Transverse colon (tissue), 4 donors: ENCODE measurements at regions of chr3 and their contacts with region 1.

Region 1: DNA sequence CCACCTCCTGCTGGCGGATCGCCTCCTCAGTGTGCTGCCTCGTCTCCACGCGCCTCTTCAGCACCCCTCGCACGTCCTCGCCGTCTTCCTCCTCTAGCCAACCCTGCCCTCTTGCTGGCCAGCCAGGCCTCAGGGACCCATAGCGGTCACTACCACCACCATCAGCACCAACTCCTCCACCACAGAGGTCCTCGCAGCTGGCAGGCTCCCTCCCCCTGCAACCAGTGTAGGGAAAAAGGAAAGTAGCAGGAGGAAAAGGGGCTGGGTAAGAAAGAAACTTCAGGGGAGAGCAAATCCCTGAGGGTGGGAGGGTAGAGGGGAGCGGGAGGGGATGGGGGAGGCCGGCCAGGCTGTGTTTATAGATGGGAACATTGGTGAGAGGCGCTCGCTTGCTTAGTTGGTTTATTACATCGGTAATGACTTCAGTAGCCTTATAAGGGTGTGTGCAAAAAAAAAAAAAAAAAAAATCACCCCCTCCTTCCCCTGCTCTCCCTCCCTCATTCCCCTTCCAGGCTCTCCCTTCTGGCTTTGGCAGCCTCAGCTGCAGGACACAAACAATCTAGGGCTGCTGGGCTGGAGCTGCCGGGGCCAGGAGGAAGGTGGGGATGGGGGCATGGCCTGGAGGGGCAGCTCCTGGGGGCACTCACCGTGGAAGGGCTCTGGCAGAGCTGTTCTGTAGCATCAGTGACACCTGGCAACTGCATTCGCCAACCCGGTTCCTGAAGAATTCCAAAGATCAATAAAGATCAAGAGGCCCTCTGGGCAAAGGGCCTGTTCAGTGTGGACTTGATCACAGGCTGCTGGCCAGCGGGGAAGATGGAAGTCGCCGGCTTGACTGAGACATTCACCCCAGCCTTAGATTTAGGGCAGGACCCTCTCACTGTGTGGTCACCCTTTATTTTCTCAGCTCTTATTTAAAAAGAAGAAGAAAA is 116.2 kb upstream of the HACD2 start:
- DNase-seq: peak; percentile 57
- H3K4me3 ChIP-seq: peak overlapping the region; percentile 39 to 57 (median 46)
- H3K27ac ChIP-seq: peak overlapping the region; percentile 81 to 89 (median 86)
- H3K4me1 ChIP-seq: peaks cover 0 to 26% (median 3%) of the 10 kb centered on the region in 4 donors
- H3K27me3 ChIP-seq: no peaks in the 10 kb centered on the region
- CTCF ChIP-seq: no peak
- EP300 ChIP-seq: no peak
- POLR2A ChIP-seq: peak; percentile 57

Region 2: GRCh38 chr3:123344175-123344906 is 356.7 kb before region 1 on chr3:
- in situ Hi-C with region 1: no loop called
- intact Hi-C with region 1: no loop called
- DNase-seq: no peak
- H3K4me3 ChIP-seq: no peak overlapping the region
- H3K27ac ChIP-seq: peak overlapping the region; percentile 14 to 55 (median 40)
- H3K4me1 ChIP-seq: peaks cover 0 to 9% (median 4%) of the 10 kb centered on the region in 4 donors
- H3K27me3 ChIP-seq: no peaks in the 10 kb centered on the region
- CTCF ChIP-seq: no peak
- EP300 ChIP-seq: no peak
- POLR2A ChIP-seq: no peak

Region 3: DNA sequence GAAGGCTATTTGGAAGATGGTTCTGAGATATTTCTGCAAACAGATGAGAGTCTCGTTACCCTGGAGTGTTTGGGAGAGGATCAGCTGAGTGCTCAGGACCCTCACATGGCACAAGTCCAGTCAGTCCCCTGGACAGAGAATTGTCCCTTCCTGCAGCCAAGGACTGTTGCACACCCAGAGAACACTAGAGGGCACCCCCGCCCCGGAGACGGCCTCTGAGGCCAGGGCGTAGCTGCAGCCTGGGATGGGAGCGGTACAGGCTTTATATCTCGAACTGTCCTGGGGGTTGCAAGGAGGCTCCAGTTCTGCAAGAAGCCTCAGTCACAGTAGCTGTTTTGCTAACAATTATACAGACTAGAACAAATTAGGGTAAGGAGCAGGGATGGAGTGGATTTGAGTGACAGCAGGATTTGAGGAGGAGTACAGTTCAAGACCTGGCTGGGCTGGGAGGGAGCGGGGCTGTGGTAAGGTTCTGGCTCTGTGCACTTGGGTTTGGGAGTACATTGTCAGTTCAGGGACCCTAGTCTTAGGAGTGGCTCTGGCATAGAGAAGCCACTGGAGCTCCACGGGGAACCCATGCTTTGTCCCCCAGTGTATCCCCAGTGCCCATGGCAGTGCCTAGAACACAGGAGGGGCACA is 48.6 kb before region 1 on chr3:
- in situ Hi-C with region 1: no loop called
- intact Hi-C with region 1: loop called (anchors 5 kb)
- DNase-seq: peak; percentile 84
- H3K4me3 ChIP-seq: no peak overlapping the region
- H3K27ac ChIP-seq: peak overlapping the region; percentile 71 to 90 (median 80)
- H3K4me1 ChIP-seq: peaks cover 23 to 53% (median 27%) of the 10 kb centered on the region in 4 donors
- H3K27me3 ChIP-seq: no peaks in the 10 kb centered on the region
- CTCF ChIP-seq: peak; percentile 83 to 88 (median 84)
- EP300 ChIP-seq: no peak
- POLR2A ChIP-seq: no peak

Region 4: GRCh38 chr3:123667784-123668183 is 33.3 kb before region 1 on chr3:
- in situ Hi-C with region 1: no loop called
- intact Hi-C with region 1: no loop called
- DNase-seq: no peak
- H3K4me3 ChIP-seq: no peak overlapping the region
- H3K27ac ChIP-seq: peak overlapping the region; percentile 20 to 89 (median 52)
- H3K4me1 ChIP-seq: peaks cover 0 to 21% (median 7%) of the 10 kb centered on the region in 4 donors
- H3K27me3 ChIP-seq: no peaks in the 10 kb centered on the region
- CTCF ChIP-seq: no peak
- EP300 ChIP-seq: no peak
- POLR2A ChIP-seq: no peak

Region 5: GRCh38 chr3:124044956-124045355 is 343.9 kb after region 1 on chr3:
- in situ Hi-C with region 1: no loop called
- intact Hi-C with region 1: no loop called
- DNase-seq: no peak
- H3K4me3 ChIP-seq: no peak overlapping the region
- H3K27ac ChIP-seq: no peak overlapping the region
- H3K4me1 ChIP-seq: peaks cover 0 to 12% (median 6%) of the 10 kb centered on the region in 4 donors
- H3K27me3 ChIP-seq: no peaks in the 10 kb centered on the region
- CTCF ChIP-seq: no peak
- EP300 ChIP-seq: no peak
- POLR2A ChIP-seq: no peak